ENCODE measurements at regions of chr11 and their contacts with region 1.

Region 1: GRCh38 chr11:95699631-95700470 is 89.7 kb downstream of the FAM76B start:
- DNase-seq: peak; percentile 33
- ATAC-seq: peak; percentile 64
- H3K4me3 Mint-ChIP-seq: peak overlapping the region; percentile 59
- H3K27ac Mint-ChIP-seq: peak overlapping the region; percentile 94
- H3K4me1 Mint-ChIP-seq: peaks cover 59% of the 10 kb centered on the region
- H3K27me3 Mint-ChIP-seq: no peaks in the 10 kb centered on the region

Region 2: GRCh38 chr11:95688580-95689189 is 11.2 kb before region 1 on chr11:
- CTCF ChIA-PET with region 1: interaction called, 103 read pairs
- POLR2A ChIA-PET with region 1: interaction called, 9 read pairs
- DNase-seq: peak; percentile 28
- ATAC-seq: peak; percentile 76
- H3K4me3 Mint-ChIP-seq: no peak overlapping the region
- H3K27ac Mint-ChIP-seq: no peak overlapping the region
- H3K4me1 Mint-ChIP-seq: peaks cover 16% of the 10 kb centered on the region
- H3K27me3 Mint-ChIP-seq: no peaks in the 10 kb centered on the region